ENCODE measurements at regions of chr6 and their contacts with region 1.

Region 1: DNA sequence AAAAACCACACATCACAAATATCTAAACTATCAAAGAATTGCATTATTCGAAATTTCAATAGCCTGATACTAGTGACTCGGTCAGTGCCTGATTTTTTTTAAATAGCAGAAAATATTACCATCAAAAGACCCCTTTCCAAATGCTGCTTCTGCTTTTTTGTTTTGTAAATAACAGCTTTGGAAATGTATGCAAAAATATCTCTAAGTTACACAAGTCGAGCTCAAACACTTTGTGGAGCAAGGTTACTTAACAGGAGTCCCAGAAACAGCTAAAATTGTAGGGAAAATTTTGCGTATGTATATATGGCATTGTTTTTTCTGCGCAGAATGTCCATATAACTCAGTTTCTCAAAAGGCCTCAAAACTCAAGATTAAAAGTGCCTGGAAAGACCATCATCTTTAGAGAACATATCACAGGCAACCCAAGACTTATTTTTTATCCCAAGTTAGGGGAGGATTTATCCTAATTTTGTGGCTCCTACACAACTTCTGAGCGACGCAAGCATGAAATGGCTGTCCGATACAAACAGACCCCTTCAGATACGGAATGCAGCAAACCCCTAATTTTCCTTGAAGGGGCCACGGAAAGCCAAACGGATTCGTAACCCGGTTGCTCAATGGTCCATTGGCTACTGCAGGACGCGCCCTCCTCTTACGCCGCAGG is 1.3 kb downstream of the CEP85L start:
- DNase-seq: no peak
- H3K4me3 ChIP-seq: peak overlapping the region; percentile 84
- H3K27ac ChIP-seq: peak overlapping the region; percentile 98
- H3K4me1 ChIP-seq: peaks cover 48% of the 10 kb centered on the region
- H3K27me3 ChIP-seq: no peaks in the 10 kb centered on the region
- CTCF ChIP-seq: no peak

Region 2: DNA sequence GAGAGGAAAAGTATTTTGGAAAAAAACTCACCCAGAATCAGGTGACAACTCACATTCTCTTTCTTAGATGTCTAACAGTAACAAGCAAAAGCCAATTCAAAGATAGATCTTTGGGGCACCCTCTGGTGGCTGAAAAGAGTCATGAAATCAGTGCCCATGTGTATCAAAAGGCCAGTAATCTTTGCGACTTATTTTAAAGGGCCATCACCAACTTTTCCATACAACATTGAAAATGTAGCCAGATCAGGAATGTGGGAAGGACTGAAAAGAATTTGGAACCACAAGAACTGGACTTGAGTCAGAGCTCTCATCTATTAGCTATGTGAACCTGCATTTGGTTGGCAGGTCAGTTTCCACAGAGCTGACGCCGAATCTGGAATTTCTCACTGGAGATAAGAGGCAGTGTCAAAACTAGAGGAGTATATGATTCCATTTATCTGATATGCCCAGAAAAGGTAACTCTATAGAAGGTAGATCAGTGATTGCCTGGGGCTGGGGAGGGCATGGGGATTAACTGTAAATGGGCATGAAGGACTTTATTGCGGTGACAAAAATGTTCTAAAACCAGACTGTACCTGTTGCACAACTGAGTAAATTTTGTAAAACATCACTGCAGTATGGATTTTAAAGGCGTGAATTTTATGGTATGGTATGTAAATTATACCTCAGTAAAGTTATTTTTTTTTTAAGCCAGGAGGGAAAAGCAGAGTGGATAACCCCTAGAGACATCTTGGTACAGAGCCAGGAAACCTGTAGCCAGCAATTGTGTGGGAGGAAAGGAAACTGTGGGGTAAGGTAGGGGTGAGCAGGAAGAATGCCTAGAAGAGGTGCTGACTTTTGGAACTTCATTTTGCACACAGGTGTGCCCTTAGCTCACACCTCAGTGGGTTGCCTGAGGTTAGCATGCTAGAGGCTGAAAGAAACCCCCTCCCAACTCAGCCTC is 126.8 kb after region 1 on chr6:
- intact Hi-C with region 1: loop called (anchors 10 kb)
- DNase-seq: peak; percentile 29
- H3K4me3 ChIP-seq: peak overlapping the region; percentile 41
- H3K27ac ChIP-seq: no peak overlapping the region
- H3K4me1 ChIP-seq: peaks cover 12% of the 10 kb centered on the region
- H3K27me3 ChIP-seq: no peaks in the 10 kb centered on the region
- CTCF ChIP-seq: peak; percentile 81

Region 3: DNA sequence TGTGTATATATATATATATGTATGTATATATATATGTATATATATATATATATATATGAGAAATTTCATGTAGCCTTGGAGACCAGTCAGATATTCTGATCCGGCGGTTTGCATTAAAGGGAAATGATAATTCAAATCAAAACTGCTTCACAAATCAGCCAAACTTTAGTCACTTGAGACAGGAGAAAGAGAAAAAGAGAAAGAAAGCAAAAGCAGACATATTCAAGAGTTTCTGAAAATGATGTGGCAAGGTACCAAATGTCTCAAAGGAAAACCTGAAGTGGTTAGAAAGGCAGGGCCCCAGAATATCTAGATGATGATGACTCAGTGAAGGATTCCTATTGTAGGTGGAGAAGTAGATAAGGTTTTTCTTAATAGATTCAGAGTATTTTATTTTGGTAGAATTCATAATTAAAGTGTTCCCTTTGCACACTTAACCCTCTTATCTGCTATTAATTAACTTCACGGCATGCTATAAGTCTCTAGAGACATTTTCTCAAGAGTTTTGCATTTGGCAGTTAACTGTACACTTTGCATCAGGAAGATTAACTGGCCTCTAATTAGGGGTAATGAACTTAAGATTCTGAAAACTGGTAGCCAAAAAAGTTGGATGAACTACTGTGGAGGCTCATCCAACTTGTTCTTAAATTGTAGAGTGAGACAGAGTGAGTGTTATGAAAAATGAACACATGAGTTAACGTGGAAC is 193.8 kb after region 1 on chr6:
- intact Hi-C with region 1: no loop called
- DNase-seq: no peak
- H3K4me3 ChIP-seq: no peak overlapping the region
- H3K27ac ChIP-seq: no peak overlapping the region
- H3K4me1 ChIP-seq: no peaks in the 10 kb centered on the region
- H3K27me3 ChIP-seq: no peaks in the 10 kb centered on the region
- CTCF ChIP-seq: no peak